ENCODE measurements at regions of chr2 and their contacts with region 1.

Region 1: GRCh38 chr2:142153601-142154000 is 22.8 kb upstream of the LRP1B start:
- DNase-seq: no peak
- H3K4me3 ChIP-seq: no peak overlapping the region
- H3K4me3 Mint-ChIP-seq: no peak overlapping the region
- H3K27ac Mint-ChIP-seq: no peak overlapping the region
- H3K4me1 ChIP-seq: no peaks in the 10 kb centered on the region
- H3K4me1 Mint-ChIP-seq: no peaks in the 10 kb centered on the region
- H3K27me3 ChIP-seq: no peaks in the 10 kb centered on the region
- H3K27me3 Mint-ChIP-seq: peaks cover 5% of the 10 kb centered on the region
- CTCF ChIP-seq: no peak

Region 2: GRCh38 chr2:142130111-142131009 is 23.2 kb before region 1 on chr2:
- CTCF ChIA-PET with region 1: no interaction called
- POLR2A ChIA-PET with region 1: no interaction called
- intact Hi-C with region 1: loop called (anchors 2 kb)
- DNase-seq: peak; percentile 22 to 36
- H3K4me3 ChIP-seq: peak overlapping the region; percentile 33
- H3K4me3 Mint-ChIP-seq: peak overlapping the region; percentile 69
- H3K27ac Mint-ChIP-seq: no peak overlapping the region
- H3K4me1 ChIP-seq: no peaks in the 10 kb centered on the region
- H3K4me1 Mint-ChIP-seq: no peaks in the 10 kb centered on the region
- H3K27me3 ChIP-seq: no peaks in the 10 kb centered on the region; the same call in none of the 2 replicates
- H3K27me3 Mint-ChIP-seq: peaks cover 46% of the 10 kb centered on the region
- CTCF ChIP-seq: no peak

Measured in Caco-2 (cell line).